Adrenal gland (tissue), 19 donors: ENCODE measurements at regions of chr11 and their contacts with region 1.

Region 1: DNA sequence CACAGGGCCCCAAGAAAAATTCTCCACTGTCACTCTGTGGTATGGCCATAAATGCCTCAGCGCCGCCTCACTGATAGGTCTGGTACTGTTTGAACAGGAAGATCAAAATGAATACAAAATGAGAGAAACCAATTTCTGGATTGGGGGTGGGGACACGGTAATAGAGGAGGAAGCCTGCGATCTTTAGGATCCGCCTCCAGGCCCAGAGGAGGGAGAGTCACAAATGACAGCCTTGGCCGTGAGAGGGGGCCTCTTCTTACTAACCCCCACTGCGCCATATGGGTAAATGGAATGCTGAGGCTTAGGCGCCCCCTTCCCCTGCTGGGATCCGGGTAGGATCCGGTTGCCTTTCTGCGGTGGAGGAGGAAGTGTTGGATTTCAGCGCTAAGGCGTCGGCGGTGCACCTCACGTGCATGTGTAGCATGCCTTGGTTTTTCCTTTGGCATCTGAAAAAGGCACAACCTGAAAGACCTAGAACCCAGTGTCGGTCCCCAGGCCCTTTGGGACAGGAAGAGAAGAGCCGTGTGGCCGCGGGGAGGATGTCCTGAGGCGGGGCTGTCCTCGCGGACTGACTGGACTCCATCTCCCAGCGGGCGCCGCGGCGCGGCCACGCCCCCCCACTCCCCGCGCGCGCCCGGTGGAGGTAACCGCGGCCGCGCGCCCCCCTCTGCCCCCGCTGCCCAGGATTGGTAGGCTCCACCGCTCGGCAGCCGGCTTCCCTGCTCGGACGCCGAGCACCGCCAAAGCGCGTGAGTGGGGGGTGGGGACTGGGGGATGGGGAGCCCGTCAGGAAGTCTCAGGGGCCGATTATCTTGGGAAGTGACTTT is 718 bp upstream of the MADD start:
- DNase-seq: peak; percentile 92 to 95 (median 94)
- H3K4me3 ChIP-seq: peak overlapping the region in 3 of 4 donors; percentile 40 to 89 (median 44)
- H3K27ac ChIP-seq: peak overlapping the region; percentile 65 to 98 (median 91)
- H3K4me1 ChIP-seq: peaks cover 5 to 48% of the 10 kb centered on the region in 2 donors
- H3K27me3 ChIP-seq: no peaks in the 10 kb centered on the region
- CTCF ChIP-seq: peak in 3 of 6 experiments; percentile 26 to 54 (median 30)
- POLR2A ChIP-seq: peak in 1 of 2 donors; percentile 26

Region 2: GRCh38 chr11:47186076-47186936 is 82.9 kb before region 1 on chr11 and contains the start of gene PACSIN3:
- intact Hi-C with region 1: loop called (anchors 5 to 10 kb)
- DNase-seq: peak in 5 of 7 donors; percentile 41 to 71 (median 55)
- H3K4me3 ChIP-seq: peak within 1 kb of the TSS; percentile 54 to 78 (median 62)
- H3K27ac ChIP-seq: peak within 1 kb of the TSS; percentile 85 to 96 (median 91)
- H3K4me1 ChIP-seq: peaks cover 37 to 47% of the 10 kb centered on the region in 2 donors
- H3K27me3 ChIP-seq: no peaks in the 10 kb centered on the region
- CTCF ChIP-seq: peak in 3 of 6 experiments; percentile 9 to 33 (median 29)
- POLR2A ChIP-seq: peak in 1 of 2 donors; percentile 6
- total RNA-seq, gene PACSIN3: 69.9 to 211 (median 108) TPM

Region 3: GRCh38 chr11:47355283-47356128 is 86.3 kb after region 1 on chr11:
- intact Hi-C with region 1: loop called in 1 of 2 experiments (anchors 10 kb)
- DNase-seq: peak; percentile 96 to 99 (median 98)
- H3K4me3 ChIP-seq: peak overlapping the region in 2 of 4 donors; percentile 28 to 58
- H3K27ac ChIP-seq: peak overlapping the region in 2 of 5 donors; percentile 52 to 67
- H3K4me1 ChIP-seq: peaks cover 21% of the 10 kb centered on the region in 2 donors
- H3K27me3 ChIP-seq: no peaks in the 10 kb centered on the region
- CTCF ChIP-seq: peak; percentile 88 to 100 (median 98)
- POLR2A ChIP-seq: peak in 1 of 2 donors; percentile 12